BJ (cell line): ENCODE measurements at regions of chr14 and their contacts with region 1.

Region 1: DNA sequence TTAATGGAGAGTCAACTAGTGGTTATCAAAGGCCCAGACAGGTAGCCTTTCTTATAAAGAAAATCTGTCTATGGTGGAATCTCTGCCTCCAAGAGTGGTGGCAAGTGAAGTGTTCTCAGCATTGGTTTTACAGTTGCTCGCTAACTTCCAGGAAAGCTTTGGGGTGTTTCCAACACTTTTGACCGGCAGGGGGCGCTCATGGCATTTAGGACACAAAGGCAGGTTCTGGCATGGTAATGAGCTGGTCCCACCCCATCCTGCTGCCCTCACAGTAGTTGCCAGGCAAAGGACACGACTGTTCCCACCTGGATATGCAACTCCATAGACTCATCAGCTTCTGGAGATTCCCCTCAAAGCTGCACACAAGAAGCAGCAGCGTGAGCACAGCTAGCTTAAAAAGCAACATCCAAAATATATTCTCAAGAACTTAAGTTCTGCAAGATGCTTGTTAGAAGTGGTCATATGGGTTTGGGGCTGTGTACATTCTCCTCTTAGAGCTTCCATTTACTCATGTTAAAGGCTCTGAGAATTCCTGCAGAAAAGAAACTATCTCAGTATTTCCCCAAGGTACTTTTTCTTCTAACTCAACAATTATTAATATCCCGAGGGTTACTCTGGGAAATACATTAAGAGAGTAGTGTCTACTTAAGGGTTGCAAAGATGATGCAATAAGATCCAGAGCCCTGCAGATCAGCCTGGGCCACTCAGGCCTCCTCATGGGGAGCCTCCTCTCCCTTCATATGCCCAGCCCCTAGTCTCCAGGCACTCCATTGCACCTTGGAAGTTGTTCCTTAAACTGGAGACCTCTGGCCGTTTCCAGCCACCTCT is 14.8 kb downstream of the PROX2 start:
- DNase-seq: no peak
- H3K4me3 ChIP-seq: no peak overlapping the region
- H3K27me3 ChIP-seq: no peaks in the 10 kb centered on the region
- CTCF ChIP-seq: peak; percentile 85

Region 2: DNA sequence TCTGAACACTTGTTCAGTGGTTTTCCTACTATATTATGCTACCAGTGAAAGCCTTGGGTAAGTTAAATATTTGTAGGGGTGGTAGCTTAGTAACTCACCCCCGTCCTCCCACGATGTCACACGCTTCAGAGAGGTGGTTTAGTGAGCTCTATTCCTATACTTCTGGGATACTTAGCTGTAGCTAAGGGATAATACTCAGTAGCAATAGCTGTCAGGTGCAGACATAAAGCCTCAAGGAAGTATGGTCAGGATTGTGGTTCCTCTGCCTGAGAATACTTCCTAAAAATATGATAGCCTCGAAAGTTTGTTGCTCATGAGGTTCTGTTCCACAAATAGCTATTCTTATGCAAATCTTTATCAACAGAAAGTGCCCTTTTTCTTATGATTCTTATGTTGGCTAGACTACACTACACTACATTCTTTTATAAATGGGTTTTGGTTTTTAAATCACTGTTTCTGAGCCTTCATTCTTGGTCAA is 32.5 kb after region 1 on chr14:
- CTCF ChIA-PET with region 1: interaction called, 315 read pairs
- POLR2A ChIA-PET with region 1: no interaction called
- DNase-seq: no peak
- H3K4me3 ChIP-seq: no peak overlapping the region
- H3K27me3 ChIP-seq: no peaks in the 10 kb centered on the region
- CTCF ChIP-seq: no peak

Region 3: DNA sequence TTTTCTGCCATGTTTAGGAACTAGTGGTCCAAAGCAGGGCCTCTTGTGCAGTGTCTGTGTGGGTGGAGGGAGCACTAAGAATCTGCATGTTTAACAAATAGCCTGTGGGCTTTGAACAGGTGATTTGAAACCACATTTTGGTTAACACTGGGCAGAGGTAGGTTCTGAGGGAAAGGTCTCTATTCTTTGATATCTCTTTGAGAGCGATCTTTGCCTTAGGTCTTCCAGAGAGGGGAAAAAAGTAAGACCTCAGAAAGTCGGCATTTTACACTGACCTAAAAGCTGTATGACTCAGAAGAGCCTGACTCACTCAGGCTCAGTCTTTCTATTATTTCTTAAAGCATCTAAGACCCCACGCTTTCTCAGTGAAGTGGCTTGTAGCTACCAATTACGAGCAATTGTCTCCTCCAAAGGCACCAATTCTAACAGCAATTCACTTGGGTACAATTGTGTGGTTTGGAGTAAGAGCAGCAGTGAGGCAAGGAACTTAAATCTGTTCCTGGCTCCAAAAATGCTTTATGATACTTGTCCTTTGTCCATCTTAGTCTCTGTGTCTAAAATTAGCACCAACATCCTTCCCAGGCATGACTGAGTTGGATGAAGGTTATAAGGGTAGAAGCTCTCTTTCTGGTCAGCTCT is 150.4 kb after region 1 on chr14:
- CTCF ChIA-PET with region 1: no interaction called
- POLR2A ChIA-PET with region 1: no interaction called
- DNase-seq: peak; percentile 17
- H3K4me3 ChIP-seq: no peak overlapping the region
- H3K27me3 ChIP-seq: no peaks in the 10 kb centered on the region
- CTCF ChIP-seq: no peak